Astrocyte of the cerebellum (primary cell): ENCODE measurements at regions of chr17 and their contacts with region 1.

Region 1: DNA sequence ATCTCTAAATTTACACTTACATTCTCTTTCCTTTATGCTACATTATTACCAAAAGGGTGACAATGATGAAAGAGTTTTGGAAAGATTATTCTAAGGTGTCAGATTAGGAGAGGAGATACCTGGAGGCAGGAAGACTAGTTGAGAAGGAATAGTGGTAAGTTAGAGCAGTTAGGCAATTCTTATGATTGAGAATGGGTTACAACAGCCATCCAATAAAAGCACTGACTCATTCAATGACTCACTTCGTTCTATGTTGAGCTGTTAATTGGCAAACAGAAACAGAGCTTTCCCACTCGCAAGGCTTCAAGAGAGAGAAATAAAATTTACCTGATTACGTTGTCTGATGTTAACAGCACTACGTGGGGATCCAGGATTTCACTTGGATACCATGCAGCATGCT is 5.8 kb downstream of the NUP88 start:
- DNase-seq: peak; percentile 82
- H3K4me3 ChIP-seq: no peak overlapping the region
- CTCF ChIP-seq: no peak

Region 2: DNA sequence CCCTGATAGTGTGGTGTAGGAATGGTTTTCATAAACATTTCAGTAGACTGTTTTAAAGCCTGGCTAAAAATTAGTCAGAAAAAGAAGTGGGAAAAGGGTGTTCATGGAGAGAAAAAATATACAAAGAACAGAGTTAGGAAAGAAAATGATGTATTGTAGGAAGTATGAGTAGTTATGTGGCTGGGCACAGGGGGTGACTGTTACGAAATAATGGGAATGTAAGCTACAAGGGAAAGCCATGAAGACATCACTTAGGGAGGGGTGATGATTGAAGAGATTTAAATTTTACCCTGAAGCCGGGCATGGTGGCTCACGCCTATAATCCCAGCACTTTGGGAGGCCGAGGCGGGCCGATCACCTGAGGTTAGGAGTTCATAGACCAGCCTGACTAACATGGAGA is 49.5 kb before region 1 on chr17:
- in situ Hi-C with region 1: loop called (anchors 5 kb)
- DNase-seq: no peak
- H3K4me3 ChIP-seq: no peak overlapping the region
- CTCF ChIP-seq: no peak

Region 3: DNA sequence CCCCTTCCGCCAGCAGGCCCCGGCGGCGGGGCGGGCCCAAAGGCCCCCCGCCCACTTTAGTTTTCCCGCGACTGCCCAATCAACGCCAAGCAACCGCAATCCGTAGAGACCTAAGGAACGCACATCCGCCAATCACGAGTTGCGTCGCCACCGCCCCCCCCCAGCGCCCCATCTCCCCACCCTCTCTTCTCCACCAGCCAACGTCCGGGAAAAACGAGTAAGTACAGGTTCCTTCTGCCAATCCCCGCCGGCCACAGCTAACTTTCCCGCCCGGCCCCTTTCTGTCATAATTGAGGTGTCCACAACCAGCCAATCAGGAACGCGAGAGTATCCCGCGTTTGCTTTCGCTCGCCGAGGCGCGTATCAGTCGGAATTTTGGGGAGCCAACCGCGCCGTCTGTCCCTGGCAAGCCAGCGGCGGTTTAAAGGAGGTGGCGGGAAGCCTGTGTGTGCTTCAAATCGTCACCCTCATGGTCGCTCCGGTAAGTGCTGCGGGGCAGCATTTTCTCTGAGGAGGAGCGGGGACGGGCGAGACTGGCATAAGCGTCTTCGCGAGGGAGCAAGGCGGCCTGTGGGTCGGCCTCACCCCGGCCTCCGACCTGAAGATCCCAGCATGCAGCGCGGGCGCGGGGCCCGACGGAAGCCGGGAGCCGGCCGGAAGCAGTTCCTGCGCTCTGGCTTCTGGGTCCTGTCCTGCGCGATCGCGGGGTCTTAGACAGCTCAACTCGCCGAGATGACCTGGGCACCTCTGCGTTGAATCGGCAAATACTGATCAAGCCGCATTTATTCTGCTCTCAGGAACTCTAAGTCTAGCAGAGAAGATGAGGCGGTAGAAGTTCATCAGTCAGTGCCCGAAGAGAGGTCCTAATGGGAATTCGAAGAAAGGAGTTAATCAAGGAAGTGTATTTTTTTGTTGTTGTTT is 72.8 kb after region 1 on chr17 and contains the start of gene MIS12:
- in situ Hi-C with region 1: no loop called
- DNase-seq: peak; percentile 98
- H3K4me3 ChIP-seq: peak within 1 kb of the TSS; percentile 98
- CTCF ChIP-seq: no peak